PC-3 (cell line): ENCODE measurements at regions of chr21 and their contacts with region 1.

Region 1: DNA sequence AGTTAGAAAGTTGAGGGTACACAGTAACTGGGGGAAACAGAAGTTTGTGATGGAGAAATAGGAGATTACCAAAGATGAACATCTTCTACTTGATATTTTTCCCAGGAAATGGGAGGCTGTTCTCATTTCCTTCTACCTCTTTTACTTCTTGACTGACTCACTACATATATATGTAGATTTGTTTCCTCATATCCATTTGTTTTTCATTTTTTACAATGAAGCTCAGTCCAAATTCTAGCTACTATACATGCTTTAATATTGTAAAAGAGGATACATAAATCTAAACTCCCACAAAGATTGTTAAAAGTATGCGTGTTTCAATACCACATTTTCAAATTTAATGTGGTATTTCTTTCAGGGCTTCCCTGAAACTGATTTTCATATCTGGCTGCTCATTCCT is 366.6 kb upstream of the NCAM2 start:
- DNase-seq: no peak
- ATAC-seq: peak; percentile 54
- H3K4me3 ChIP-seq: no peak overlapping the region
- H3K27ac ChIP-seq: no peak overlapping the region
- H3K4me1 ChIP-seq: peaks cover 4% of the 10 kb centered on the region; the same call in 1 of the 2 replicates
- H3K27me3 ChIP-seq: no peaks in the 10 kb centered on the region
- CTCF ChIP-seq: no peak

Region 2: DNA sequence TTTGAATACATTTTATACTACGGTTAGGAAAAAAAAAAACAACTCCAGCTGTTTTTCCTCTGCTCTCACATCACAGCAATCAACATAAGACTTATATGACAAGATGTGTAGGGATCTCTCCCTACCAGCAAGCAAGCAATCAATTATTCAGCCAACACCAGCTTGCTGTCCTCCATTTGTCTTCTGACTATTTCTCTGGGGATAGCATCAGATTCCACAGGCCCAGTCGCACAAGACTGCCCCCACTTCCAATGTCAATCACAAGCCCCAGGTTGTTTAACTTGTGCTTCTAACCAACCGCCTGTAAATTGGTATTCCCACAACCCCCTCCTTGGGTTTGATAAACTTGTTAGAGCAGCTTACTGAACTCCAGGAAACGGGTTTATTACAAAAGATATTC is 1355.0 kb before region 1 on chr21:
- CTCF ChIA-PET with region 1: no interaction called
- POLR2A ChIA-PET with region 1: interaction called, 14 read pairs
- intact Hi-C with region 1: no loop called
- DNase-seq: no peak
- ATAC-seq: no peak
- H3K4me3 ChIP-seq: no peak overlapping the region
- H3K27ac ChIP-seq: no peak overlapping the region
- H3K4me1 ChIP-seq: no peaks in the 10 kb centered on the region
- H3K27me3 ChIP-seq: no peaks in the 10 kb centered on the region
- CTCF ChIP-seq: no peak

Region 3: GRCh38 chr21:20004367-20004766 is 627.3 kb before region 1 on chr21:
- CTCF ChIA-PET with region 1: no interaction called
- POLR2A ChIA-PET with region 1: no interaction called
- intact Hi-C with region 1: no loop called
- DNase-seq: no peak
- ATAC-seq: no peak
- H3K4me3 ChIP-seq: no peak overlapping the region
- H3K27ac ChIP-seq: no peak overlapping the region
- H3K4me1 ChIP-seq: no peaks in the 10 kb centered on the region
- H3K27me3 ChIP-seq: no peaks in the 10 kb centered on the region
- CTCF ChIP-seq: no peak

Region 4: GRCh38 chr21:20647607-20648006 is 16.0 kb after region 1 on chr21:
- CTCF ChIA-PET with region 1: no interaction called
- POLR2A ChIA-PET with region 1: interaction called, 4 read pairs
- intact Hi-C with region 1: loop called (anchors 1 kb)
- DNase-seq: peak; percentile 73
- ATAC-seq: peak; percentile 60
- H3K4me3 ChIP-seq: no peak overlapping the region
- H3K27ac ChIP-seq: peak overlapping the region; percentile 20
- H3K4me1 ChIP-seq: peaks cover 29% of the 10 kb centered on the region
- H3K27me3 ChIP-seq: no peaks in the 10 kb centered on the region
- CTCF ChIP-seq: no peak